ENCODE measurements at regions of chr11 and their contacts with region 1.

Region 1: DNA sequence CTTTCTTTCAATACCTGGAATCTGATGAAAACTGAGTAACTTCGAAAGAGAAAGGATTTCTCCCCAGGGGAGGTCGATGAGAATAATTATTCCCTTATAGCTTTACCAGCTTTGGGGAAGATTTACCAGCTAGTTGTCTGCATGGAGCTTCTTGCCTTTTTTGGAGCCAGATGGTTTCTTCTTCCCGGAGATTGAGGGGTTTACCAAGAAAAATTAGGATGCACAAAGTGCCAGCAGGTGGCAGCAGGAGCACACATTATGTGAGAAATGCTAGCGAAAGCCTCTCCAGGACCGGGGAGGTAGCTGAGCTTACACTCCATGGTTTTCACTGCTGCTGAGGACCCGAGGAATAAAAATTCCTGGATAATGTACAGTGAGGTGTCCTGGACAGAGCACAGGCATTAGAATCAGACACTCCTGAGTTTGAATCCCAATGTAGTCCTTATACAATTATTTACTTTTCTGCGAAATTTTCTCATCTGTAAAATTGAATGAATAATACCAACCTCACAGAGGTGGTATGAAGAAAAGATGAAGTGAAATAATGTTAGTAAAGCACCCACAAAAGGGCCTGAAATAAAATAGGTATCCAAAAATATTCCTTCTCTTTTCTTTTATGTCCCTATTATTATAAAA is 46.0 kb upstream of the PARVA start:
- DNase-seq: peak; percentile 38
- H3K4me3 ChIP-seq: no peak overlapping the region
- CTCF ChIP-seq: peak; percentile 59

Region 2: GRCh38 chr11:12087075-12088004 is 244.0 kb before region 1 on chr11:
- CTCF ChIA-PET with region 1: no interaction called
- POLR2A ChIA-PET with region 1: no interaction called
- DNase-seq: no peak
- H3K4me3 ChIP-seq: peak overlapping the region; percentile 46
- CTCF ChIP-seq: peak; percentile 20

Region 3: DNA sequence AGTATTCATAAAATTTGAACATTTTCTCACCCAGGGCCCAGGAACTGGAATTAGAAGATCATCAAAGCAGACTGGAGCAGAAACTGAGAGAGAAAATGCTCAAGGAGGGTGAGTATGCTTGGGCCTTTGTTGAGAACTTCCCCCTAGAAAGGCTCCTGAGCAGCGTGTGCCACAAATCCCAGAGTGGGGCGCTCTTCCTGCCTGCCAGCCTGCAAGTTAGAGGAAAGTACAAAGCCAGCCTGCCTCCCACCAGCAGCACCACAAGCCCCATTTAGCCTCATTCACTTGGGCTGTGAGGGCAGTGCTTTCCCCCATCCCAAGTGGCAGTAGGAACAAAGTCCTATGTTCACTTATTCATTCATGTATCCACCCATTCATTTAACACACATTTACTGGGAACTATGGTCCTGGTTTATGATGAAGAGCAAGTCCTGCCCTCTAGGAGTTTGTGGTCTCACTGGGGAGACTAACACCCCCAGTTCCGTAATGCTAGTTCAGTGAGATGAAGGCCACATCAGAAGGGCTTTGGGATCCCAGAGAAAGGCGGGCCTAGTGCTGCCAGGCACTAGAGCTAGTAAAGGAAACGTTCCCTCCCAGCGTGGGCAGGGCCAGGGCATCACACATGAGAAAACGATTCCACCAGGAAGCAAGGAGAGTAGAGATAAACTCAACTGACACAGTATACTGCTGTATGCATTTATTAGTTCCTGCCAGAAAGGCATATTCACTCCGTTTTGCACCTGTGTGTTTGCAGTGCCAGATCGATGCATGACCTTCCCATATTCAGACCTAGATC is 23.6 kb after region 1 on chr11:
- CTCF ChIA-PET with region 1: interaction called, 20 read pairs
- POLR2A ChIA-PET with region 1: interaction called, 3 read pairs
- DNase-seq: no peak
- H3K4me3 ChIP-seq: no peak overlapping the region
- CTCF ChIP-seq: no peak

Region 4: GRCh38 chr11:12472401-12473005 is 141.1 kb after region 1 on chr11:
- CTCF ChIA-PET with region 1: interaction called, 21 read pairs
- POLR2A ChIA-PET with region 1: no interaction called
- DNase-seq: no peak
- H3K4me3 ChIP-seq: no peak overlapping the region
- CTCF ChIP-seq: no peak

Region 5: GRCh38 chr11:12540913-12541582 is 209.7 kb after region 1 on chr11:
- CTCF ChIA-PET with region 1: interaction called, 10 read pairs
- POLR2A ChIA-PET with region 1: no interaction called
- DNase-seq: peak; percentile 83
- H3K4me3 ChIP-seq: no peak overlapping the region
- CTCF ChIP-seq: peak; percentile 65

Region 6: DNA sequence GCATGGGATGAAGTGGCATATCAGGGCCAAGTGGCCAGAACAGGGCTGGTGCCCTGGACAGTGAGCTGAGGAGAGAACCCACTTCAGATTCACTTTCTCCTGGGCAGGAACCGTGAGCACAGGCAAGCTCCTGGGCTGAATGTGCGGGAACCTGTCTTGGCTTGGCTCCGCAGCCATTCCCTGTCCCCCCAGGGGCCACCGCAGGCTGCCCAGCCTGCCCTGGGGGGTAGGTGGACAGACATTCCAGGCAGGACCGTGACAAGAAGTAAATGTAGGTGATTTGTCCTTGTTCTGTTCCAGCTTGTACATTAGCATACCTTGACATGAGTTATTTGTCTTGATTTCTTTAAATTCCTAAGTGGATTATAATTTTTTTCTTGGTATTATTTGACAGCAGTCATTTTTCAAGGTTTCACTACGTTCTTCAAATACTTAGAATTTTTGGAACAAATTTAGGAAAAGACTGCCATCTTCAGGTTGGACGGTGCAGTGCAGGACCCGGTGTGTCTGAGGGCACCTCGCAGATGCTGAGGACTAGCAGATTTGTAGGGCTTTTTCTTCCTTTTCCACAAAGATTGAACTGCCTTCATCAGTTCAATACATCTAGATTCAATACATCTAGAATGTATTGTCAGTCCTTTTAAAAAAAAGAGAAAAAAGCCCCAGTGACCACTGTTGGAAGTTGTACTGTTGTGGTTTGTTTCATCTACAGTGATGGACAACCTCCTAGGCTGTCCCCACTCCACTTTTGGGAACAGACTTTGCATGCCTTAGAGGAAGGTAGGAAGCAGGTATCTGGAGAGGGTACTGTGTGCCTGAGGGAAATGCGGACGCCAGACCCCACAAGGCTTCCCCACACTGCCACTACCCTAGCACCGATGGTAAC is 562.7 kb after region 1 on chr11:
- CTCF ChIA-PET with region 1: interaction called, 82 read pairs
- POLR2A ChIA-PET with region 1: no interaction called
- DNase-seq: no peak
- H3K4me3 ChIP-seq: no peak overlapping the region
- CTCF ChIP-seq: peak; percentile 70

Measured in AG04449 (cell line).